ENCODE measurements at regions of chr7 and their contacts with region 1.

Region 1: GRCh38 chr7:139431010-139431409 is 52.5 kb downstream of the KLRG2 start:
- DNase-seq: no peak
- H3K4me3 ChIP-seq: no peak overlapping the region
- H3K27me3 ChIP-seq: no peaks in the 10 kb centered on the region
- CTCF ChIP-seq: no peak

Region 2: GRCh38 chr7:139340037-139340807 is 90.8 kb before region 1 on chr7:
- CTCF ChIA-PET with region 1: no interaction called
- POLR2A ChIA-PET with region 1: no interaction called
- DNase-seq: peak; percentile 97
- H3K4me3 ChIP-seq: peak overlapping the region; percentile 91
- H3K27me3 ChIP-seq: no peaks in the 10 kb centered on the region
- CTCF ChIP-seq: peak; percentile 90

Region 3: GRCh38 chr7:139403601-139404000 is 27.4 kb before region 1 on chr7:
- CTCF ChIA-PET with region 1: no interaction called
- POLR2A ChIA-PET with region 1: no interaction called
- DNase-seq: no peak
- H3K4me3 ChIP-seq: no peak overlapping the region
- H3K27me3 ChIP-seq: no peaks in the 10 kb centered on the region
- CTCF ChIP-seq: no peak

Region 4: DNA sequence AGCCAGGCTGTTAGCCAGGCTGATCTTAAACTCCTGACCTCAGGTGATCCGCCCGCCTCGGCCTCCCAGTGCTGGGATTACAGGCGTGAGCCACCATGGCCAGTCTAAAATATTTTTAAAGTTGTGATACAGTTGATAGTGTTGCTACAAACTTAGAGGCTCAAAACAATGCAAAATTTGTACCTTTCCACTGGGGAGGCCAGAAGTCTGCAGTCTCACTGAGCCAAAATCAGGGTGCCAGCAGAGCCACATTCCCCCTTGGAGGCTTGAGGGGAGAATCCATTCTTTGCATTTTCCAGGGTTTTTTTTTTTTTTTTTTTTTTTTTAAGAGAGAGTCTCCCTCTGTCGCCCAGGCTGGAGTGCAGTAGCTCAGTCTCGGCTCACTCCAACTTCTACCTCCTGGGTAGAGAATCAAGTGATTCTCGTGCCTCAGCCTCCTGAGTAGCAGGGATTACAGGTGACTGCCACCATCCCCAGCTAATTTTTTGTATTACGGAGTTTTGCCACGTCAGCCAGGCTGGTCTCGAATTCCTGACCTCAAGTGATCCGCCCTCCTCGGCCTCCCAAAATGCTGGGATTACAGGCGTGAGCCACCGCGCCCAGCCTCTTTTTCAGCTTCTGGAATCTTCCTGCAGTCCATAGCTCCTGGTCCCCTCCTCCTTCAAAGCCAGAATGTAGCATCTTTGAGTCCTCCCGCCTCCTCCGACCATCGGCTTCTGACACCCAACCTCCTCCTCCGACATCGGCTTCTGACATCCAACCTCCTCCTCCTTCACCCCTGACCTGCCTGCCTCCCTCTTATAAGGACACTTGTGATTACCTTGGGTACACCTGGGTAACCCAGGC is 15.2 kb after region 1 on chr7:
- CTCF ChIA-PET with region 1: interaction called, 14 read pairs
- POLR2A ChIA-PET with region 1: no interaction called
- DNase-seq: no peak
- H3K4me3 ChIP-seq: no peak overlapping the region
- H3K27me3 ChIP-seq: no peaks in the 10 kb centered on the region
- CTCF ChIP-seq: no peak

Region 5: GRCh38 chr7:139452958-139453672 is 22.1 kb after region 1 on chr7:
- CTCF ChIA-PET with region 1: interaction called, 14 read pairs
- POLR2A ChIA-PET with region 1: no interaction called
- DNase-seq: no peak
- H3K4me3 ChIP-seq: no peak overlapping the region
- H3K27me3 ChIP-seq: no peaks in the 10 kb centered on the region
- CTCF ChIP-seq: no peak

Measured in BJ (cell line).